ENCODE measurements at regions of chr1 and their contacts with region 1.

Region 1: GRCh38 chr1:151311589-151312331 is 15.5 kb downstream of the PI4KB start:
- DNase-seq: peak; percentile 92
- ATAC-seq: peak; percentile 99
- H3K4me3 Mint-ChIP-seq: peak overlapping the region; percentile 13
- H3K27ac Mint-ChIP-seq: peak overlapping the region; percentile 99
- H3K4me1 Mint-ChIP-seq: peaks cover 41% of the 10 kb centered on the region
- H3K27me3 Mint-ChIP-seq: no peaks in the 10 kb centered on the region

Region 2: DNA sequence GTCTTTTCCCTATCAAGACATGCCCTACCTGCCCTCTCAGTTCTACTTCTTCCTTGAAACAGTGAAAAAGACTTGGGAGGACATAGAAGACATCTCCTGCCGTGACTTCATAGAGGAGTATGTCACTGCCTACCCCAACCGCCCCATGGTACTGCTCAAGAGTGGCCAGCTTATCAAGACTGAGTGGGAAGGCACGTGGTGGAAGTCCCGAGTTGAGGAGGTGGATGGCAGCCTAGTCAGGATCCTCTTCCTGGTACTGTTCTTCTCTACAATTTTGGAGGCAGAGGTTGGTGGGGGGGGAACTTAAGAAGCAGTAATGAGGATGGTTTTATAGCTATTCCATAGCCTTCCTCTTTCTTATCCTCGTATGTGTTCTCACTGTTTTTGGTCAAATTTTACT is 366.9 kb before region 1 on chr1:
- CTCF ChIA-PET with region 1: no interaction called
- POLR2A ChIA-PET with region 1: interaction called, 10 read pairs
- intact Hi-C with region 1: no loop called
- DNase-seq: no peak
- ATAC-seq: no peak
- H3K4me3 Mint-ChIP-seq: no peak overlapping the region
- H3K27ac Mint-ChIP-seq: no peak overlapping the region
- H3K4me1 Mint-ChIP-seq: no peaks in the 10 kb centered on the region
- H3K27me3 Mint-ChIP-seq: no peaks in the 10 kb centered on the region

Region 3: GRCh38 chr1:151292207-151293030 is 19.3 kb before region 1 on chr1:
- CTCF ChIA-PET with region 1: interaction called, 12 read pairs
- POLR2A ChIA-PET with region 1: interaction called, 4 read pairs
- intact Hi-C with region 1: no loop called
- DNase-seq: no peak
- ATAC-seq: peak; percentile 34
- H3K4me3 Mint-ChIP-seq: no peak overlapping the region
- H3K27ac Mint-ChIP-seq: peak overlapping the region; percentile 55
- H3K4me1 Mint-ChIP-seq: no peaks in the 10 kb centered on the region
- H3K27me3 Mint-ChIP-seq: no peaks in the 10 kb centered on the region

Region 4: DNA sequence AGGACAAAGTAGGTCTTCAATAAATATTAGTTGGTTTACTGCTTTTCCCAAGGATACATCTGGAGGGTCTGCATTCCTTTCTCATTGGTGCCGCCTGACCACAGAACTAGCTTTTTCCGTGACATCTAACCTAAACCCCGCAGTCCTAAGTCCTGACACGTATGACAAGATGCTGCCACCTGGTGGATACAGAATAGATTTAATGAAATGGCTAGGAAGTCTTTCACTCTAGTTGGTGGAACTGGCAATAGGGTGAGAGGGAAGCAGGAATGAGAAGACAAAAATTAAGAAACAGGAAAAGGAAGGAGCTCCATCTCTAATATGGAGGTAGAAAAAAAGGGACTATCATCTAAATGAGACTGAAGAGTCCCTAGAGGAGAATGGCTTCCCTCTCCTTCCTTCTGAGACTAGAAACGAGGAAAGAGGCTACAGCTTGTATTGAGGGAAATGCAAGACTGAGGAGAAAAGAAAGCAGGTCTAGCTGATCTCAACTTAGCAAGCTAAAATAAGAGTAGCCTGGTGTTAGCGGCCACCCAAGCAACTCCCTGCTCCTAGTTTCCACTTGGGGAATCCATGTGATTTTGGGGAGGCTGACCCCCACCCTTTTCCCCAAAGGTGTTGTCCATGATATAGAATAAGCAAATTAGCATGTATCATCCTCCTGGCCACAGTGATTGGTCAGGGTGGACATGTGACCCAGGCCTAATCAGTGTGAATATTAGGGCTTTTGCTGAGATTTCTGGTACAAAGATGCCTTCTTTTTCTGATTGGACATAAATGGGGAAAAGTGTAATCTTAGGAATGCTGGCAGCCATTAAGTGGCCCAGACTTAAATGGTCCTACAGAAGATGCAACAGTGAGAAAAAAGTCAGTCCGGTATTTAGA is 29.4 kb after region 1 on chr1:
- CTCF ChIA-PET with region 1: interaction called, 203 read pairs
- POLR2A ChIA-PET with region 1: no interaction called
- intact Hi-C with region 1: no loop called
- DNase-seq: peak; percentile 65
- ATAC-seq: peak; percentile 91
- H3K4me3 Mint-ChIP-seq: no peak overlapping the region
- H3K27ac Mint-ChIP-seq: peak overlapping the region; percentile 39
- H3K4me1 Mint-ChIP-seq: peaks cover 24% of the 10 kb centered on the region
- H3K27me3 Mint-ChIP-seq: no peaks in the 10 kb centered on the region

Region 5: GRCh38 chr1:151346769-151347522 is 35.2 kb after region 1 on chr1 and contains the start of gene RFX5:
- CTCF ChIA-PET with region 1: interaction called, 203 read pairs
- POLR2A ChIA-PET with region 1: interaction called, 5 read pairs
- intact Hi-C with region 1: loop called (anchors 1 kb)
- DNase-seq: peak; percentile 96
- ATAC-seq: peak; percentile 98
- H3K4me3 Mint-ChIP-seq: peak within 1 kb of the TSS; percentile 96
- H3K27ac Mint-ChIP-seq: peak within 1 kb of the TSS; percentile 94
- H3K4me1 Mint-ChIP-seq: peaks cover 31% of the 10 kb centered on the region
- H3K27me3 Mint-ChIP-seq: no peaks in the 10 kb centered on the region
- total RNA-seq, gene RFX5: 47.6 to 50.4 TPM

Region 6: DNA sequence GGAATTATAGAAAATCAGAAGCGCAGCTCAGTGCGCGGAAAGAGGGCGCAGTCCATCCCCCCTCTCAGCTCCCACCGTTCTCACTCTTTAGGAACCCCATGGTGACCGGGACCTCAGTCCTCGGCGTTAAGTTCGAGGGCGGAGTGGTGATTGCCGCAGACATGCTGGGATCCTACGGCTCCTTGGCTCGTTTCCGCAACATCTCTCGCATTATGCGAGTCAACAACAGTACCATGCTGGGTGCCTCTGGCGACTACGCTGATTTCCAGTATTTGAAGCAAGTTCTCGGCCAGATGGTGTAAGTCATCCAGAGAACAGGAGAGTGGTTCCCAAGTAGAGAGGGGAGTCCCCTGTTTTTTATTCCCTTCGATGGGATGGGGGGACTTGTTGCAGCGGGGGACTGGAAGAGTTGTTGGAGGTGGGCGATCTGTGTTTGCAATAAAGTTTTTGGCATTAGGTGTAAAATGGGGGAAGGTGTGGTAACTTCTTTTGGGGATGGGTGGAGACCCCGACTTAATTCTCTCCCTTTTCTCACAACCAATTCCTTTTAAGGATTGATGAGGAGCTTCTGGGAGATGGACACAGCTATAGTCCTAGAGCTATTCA is 88.2 kb after region 1 on chr1:
- CTCF ChIA-PET with region 1: interaction called, 4 read pairs
- POLR2A ChIA-PET with region 1: interaction called, 5 read pairs
- intact Hi-C with region 1: loop called in 1 of 2 experiments (anchors 1 kb)
- DNase-seq: peak; percentile 43
- ATAC-seq: peak; percentile 21
- H3K4me3 Mint-ChIP-seq: peak overlapping the region; percentile 88
- H3K27ac Mint-ChIP-seq: peak overlapping the region; percentile 99
- H3K4me1 Mint-ChIP-seq: peaks cover 29% of the 10 kb centered on the region
- H3K27me3 Mint-ChIP-seq: no peaks in the 10 kb centered on the region

Region 7: GRCh38 chr1:151710187-151710840 is 398.6 kb after region 1 on chr1:
- CTCF ChIA-PET with region 1: no interaction called
- POLR2A ChIA-PET with region 1: no interaction called
- intact Hi-C with region 1: no loop called
- DNase-seq: peak; percentile 70
- ATAC-seq: no peak
- H3K4me3 Mint-ChIP-seq: no peak overlapping the region
- H3K27ac Mint-ChIP-seq: no peak overlapping the region
- H3K4me1 Mint-ChIP-seq: no peaks in the 10 kb centered on the region
- H3K27me3 Mint-ChIP-seq: peaks cover 10% of the 10 kb centered on the region

Region 8: GRCh38 chr1:151739590-151740375 is 428.0 kb after region 1 on chr1:
- CTCF ChIA-PET with region 1: no interaction called
- POLR2A ChIA-PET with region 1: no interaction called
- intact Hi-C with region 1: loop called in 1 of 2 experiments (anchors 10 kb)
- DNase-seq: no peak
- ATAC-seq: no peak
- H3K4me3 Mint-ChIP-seq: no peak overlapping the region
- H3K27ac Mint-ChIP-seq: no peak overlapping the region
- H3K4me1 Mint-ChIP-seq: no peaks in the 10 kb centered on the region
- H3K27me3 Mint-ChIP-seq: peaks cover 1% of the 10 kb centered on the region

Measured in activated CD4-positive, alpha-beta T cell treated with anti-CD3 and anti-CD28 coated beads for 36 hours (primary cell).